ENCODE measurements at regions of chr15 and their contacts with region 1.

Region 1: DNA sequence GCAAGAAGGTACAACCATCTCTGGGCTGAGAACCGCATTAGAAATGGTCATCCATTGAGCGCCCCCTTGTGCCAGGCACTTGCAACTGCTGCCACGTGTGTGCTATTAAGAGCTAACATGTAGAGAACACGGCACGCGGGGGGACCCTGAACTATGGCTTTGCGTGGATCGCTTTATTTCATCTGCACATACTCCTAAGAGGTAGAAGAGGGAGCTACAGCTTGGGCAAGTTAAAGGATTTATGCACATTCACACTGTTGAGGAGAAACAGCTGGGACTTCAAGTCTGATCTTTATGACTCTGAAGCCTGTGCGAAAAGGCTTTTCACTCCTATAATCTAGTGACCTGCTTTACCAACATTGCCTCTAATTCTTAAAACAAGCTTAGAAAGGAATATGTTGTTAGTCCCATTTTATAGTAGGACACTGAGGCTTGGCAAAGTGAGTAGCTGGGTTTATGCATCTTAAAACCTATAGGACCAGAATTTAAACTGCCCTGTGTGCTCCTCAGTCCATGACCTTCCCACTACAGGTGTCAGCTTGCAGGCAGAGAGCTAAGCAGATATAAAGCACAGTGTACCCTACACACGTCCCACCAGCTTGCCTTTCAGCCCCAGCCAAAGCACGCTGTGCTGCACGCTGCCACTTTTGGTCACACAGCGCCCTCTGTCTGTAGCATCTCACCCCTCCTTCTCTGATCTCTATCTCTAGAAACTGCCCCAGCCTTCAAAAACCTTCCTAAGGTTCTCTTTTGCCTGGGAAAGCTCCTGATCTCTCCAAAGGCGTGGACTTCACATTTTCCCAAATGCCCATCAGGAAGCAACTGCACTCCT is 57.8 kb downstream of the STARD5 start:
- DNase-seq: no peak
- H3K4me3 ChIP-seq: no peak overlapping the region
- H3K27me3 ChIP-seq: peaks cover 4% of the 10 kb centered on the region
- CTCF ChIP-seq: peak; percentile 96

Region 2: GRCh38 chr15:80915472-80915871 is 350.7 kb before region 1 on chr15:
- CTCF ChIA-PET with region 1: no interaction called
- POLR2A ChIA-PET with region 1: no interaction called
- DNase-seq: no peak
- H3K4me3 ChIP-seq: no peak overlapping the region
- H3K27me3 ChIP-seq: no peaks in the 10 kb centered on the region
- CTCF ChIP-seq: no peak

Region 3: DNA sequence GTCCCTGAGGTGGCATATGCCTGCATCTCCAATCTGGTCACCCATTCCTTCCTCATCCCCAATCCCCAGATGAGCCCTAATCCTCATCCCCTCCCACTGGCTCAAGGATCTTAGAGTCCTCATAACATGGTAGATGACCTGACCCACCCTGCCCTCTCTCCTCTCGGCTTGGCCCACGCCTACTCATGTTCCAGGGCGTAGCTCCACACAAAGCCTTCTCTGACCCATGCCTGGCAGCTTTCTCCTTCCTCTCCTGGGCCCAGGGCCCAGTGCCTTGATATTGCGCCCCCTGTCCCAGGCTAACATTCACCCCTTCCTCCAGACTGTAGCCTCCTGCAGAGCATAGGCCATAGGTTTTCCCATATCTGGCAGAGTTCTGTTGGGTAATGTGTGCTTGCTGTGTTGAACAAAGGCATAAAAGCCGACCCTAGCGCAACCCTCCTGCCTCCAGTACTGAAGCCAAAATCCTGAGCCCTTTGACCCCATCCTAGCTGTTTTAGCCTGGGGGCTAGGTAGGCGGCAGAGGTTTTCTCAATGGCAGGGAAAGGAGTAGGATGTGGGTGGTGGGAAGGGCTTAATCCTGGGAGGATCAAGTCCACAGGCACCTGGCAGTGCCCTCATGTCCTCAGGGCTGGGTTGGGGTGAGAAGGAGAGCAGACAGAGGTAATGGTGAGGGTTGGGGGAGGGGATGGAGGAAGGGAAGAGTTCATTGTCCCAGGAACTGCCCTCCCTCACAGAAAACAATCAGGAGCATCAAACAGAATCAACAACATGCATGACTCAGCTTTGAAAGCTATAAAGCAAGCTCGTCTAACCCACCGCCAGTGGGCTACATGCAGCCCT is 312.0 kb before region 1 on chr15:
- CTCF ChIA-PET with region 1: interaction called, 10 read pairs
- POLR2A ChIA-PET with region 1: interaction called, 3 read pairs
- DNase-seq: no peak
- H3K4me3 ChIP-seq: no peak overlapping the region
- H3K27me3 ChIP-seq: no peaks in the 10 kb centered on the region
- CTCF ChIP-seq: 0 out of 2 replicates have a peak, but pooled peaks have one; percentile 9

Region 4: DNA sequence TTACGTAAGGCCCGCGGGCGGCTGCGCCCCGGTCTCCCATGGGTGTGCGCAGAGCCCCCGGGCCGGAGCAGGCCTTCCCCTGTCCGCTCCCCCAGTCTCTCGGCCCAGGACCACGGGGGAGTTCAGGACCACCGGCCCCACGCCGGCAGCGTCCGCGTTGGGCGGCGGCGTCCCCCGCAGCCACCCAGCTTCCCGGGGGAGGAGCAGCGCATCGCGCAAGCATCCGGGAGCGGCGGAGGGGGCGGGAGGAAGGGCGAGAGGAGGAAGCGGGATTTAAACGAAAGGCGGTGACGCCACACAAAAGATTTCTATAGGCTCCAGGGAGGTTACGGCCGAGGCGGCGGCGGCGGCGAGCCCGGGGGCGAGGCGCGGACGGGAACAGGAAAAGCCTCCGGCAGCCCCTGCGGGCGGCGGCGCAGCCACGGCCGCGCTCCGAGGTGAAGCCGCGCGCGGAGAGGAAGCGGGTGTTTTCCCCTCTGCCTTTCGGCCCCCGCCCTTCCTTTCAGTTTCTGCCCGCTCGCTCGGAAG is 265.5 kb before region 1 on chr15 and contains the start of gene TLNRD1:
- CTCF ChIA-PET with region 1: interaction called, 26 read pairs
- POLR2A ChIA-PET with region 1: no interaction called
- DNase-seq: peak; percentile 46
- H3K4me3 ChIP-seq: peak within 1 kb of the TSS; percentile 84
- H3K27me3 ChIP-seq: no peaks in the 10 kb centered on the region
- CTCF ChIP-seq: no peak
- polyA plus RNA-seq, gene TLNRD1: 3.9 and 5.2 TPM in 2 replicates

Region 5: GRCh38 chr15:81117136-81117535 is 149.0 kb before region 1 on chr15:
- CTCF ChIA-PET with region 1: interaction called, 378 read pairs
- POLR2A ChIA-PET with region 1: no interaction called
- DNase-seq: no peak
- H3K4me3 ChIP-seq: no peak overlapping the region
- H3K27me3 ChIP-seq: peaks cover 5% of the 10 kb centered on the region
- CTCF ChIP-seq: no peak

Region 6: GRCh38 chr15:81155375-81156218 is 110.6 kb before region 1 on chr15:
- CTCF ChIA-PET with region 1: interaction called, 127 read pairs
- POLR2A ChIA-PET with region 1: no interaction called
- DNase-seq: no peak
- H3K4me3 ChIP-seq: no peak overlapping the region
- H3K27me3 ChIP-seq: no peaks in the 10 kb centered on the region; the same call in 1 of the 2 replicates
- CTCF ChIP-seq: peak; percentile 49

Region 7: GRCh38 chr15:81182756-81183438 is 83.3 kb before region 1 on chr15:
- CTCF ChIA-PET with region 1: interaction called, 10 read pairs
- POLR2A ChIA-PET with region 1: no interaction called
- DNase-seq: no peak
- H3K4me3 ChIP-seq: no peak overlapping the region; the same call in 1 of the 2 replicates
- H3K27me3 ChIP-seq: peaks cover 13% of the 10 kb centered on the region
- CTCF ChIP-seq: peak; percentile 39

Region 8: GRCh38 chr15:81400640-81401236 is 134.6 kb after region 1 on chr15:
- CTCF ChIA-PET with region 1: interaction called, 15 read pairs
- POLR2A ChIA-PET with region 1: no interaction called
- DNase-seq: no peak
- H3K4me3 ChIP-seq: no peak overlapping the region
- H3K27me3 ChIP-seq: peaks cover 2% of the 10 kb centered on the region
- CTCF ChIP-seq: peak; percentile 73

Measured in BJ (cell line).